ENCODE measurements at regions of chr14 and their contacts with region 1.

Region 1: DNA sequence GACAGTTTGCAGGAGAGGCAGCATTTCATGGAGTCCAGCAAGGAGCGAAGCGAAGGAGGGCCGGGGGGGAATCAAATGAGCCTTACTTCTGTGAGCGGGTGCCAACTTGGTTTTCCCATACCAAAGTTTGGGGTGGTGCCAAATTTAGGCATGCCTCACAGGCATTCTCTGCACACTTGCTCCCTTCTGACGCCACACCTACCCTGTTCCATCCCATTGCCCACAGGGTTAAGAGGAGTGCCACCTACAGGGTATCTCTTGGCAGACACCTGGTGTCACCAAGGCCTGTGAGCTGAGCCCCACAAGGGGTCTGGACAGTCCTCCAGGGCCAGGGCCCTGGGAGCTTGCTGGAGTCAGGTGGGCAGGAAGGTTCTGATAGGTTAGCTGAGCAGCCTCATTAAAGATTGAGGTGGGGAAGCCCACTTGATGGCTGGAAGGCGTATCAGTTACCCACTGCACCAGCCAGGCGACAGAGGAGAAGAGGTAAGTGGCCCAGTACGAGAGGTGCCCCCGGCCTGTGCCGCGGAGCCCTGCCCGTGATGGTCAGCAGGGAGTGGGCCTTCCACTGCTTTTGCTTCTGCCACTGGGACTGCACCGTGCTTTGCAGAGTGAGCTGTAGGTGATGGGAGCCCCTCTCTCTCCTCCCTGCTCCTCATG is 45.2 kb downstream of the DEGS2 start:
- DNase-seq: no peak
- H3K4me3 ChIP-seq: no peak overlapping the region
- H3K27ac ChIP-seq: no peak overlapping the region
- H3K4me1 ChIP-seq: no peaks in the 10 kb centered on the region
- H3K27me3 ChIP-seq: no peaks in the 10 kb centered on the region
- CTCF ChIP-seq: no peak
- POLR2A ChIP-seq: no peak

Region 2: DNA sequence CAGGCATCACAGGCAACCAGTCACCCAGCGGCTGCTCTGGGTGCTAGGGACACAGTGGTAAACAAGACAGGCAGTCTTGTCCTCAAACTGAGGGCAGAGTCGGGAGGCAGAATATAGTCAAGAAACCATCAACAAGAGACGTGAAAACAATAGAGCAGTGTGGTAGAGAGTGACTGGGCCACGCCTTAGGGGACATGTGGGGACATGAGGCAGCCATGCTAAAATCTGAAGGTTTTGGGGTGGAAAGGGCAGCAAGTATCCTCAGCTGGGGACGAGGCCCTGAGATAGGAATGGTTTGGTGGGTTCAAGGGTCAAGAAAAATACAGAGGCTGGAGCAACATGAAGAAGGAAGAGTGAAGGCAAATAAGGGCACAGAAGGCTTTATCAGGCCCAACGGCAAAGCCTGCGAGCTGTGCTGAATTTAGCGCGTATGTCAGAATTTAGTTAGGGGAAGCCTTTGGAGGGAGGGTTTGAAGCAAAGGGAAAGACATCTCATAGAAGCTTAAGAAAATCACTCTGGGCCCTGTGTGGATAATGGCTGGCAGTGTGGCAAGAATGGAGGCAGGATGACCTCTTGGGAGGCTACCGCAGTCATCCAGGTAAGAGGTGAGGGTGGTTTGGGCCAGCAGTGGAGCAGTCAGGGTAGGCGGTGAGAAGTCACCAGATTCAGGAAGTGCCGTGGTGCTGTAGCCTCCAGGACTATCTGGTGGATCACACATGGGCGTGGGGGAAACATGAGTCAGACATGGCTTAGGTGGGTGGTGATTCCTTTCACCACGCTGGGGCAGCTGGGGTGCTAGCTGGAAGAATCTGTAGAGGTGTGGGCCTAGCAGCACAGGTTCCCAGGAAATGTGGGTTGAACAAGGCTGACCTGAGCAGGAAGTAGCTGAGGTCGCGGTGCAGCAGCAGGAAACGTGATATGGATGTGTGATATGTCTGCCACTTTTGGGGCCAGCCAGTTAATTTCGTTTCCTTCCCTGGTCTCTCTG is 46.0 kb before region 1 on chr14:
- intact Hi-C with region 1: loop called (anchors 5 kb)
- DNase-seq: no peak
- H3K4me3 ChIP-seq: no peak overlapping the region
- H3K27ac ChIP-seq: no peak overlapping the region
- H3K4me1 ChIP-seq: no peaks in the 10 kb centered on the region
- H3K27me3 ChIP-seq: no peaks in the 10 kb centered on the region
- CTCF ChIP-seq: no peak
- POLR2A ChIP-seq: no peak

Measured in prostate gland (tissue), 2 donors.